Psoas muscle (tissue), 8 donors: ENCODE measurements at regions of chr2 and their contacts with region 1.

Region 1: GRCh38 chr2:98012561-98012991 is 16.8 kb upstream of the TMEM131 start:
- DNase-seq: no peak
- ATAC-seq: no peak
- H3K4me3 ChIP-seq: no peak overlapping the region
- H3K27ac ChIP-seq: peak overlapping the region; percentile 89
- H3K4me1 ChIP-seq: peaks cover 28% of the 10 kb centered on the region
- H3K27me3 ChIP-seq: no peaks in the 10 kb centered on the region
- CTCF ChIP-seq: no peak

Region 2: GRCh38 chr2:96452053-96452452 is 1560.5 kb before region 1 on chr2:
- intact Hi-C with region 1: no loop called
- DNase-seq: no peak
- ATAC-seq: no peak
- H3K4me3 ChIP-seq: no peak overlapping the region
- H3K27ac ChIP-seq: no peak overlapping the region
- H3K4me1 ChIP-seq: no peaks in the 10 kb centered on the region
- H3K27me3 ChIP-seq: no peaks in the 10 kb centered on the region
- CTCF ChIP-seq: no peak

Region 3: DNA sequence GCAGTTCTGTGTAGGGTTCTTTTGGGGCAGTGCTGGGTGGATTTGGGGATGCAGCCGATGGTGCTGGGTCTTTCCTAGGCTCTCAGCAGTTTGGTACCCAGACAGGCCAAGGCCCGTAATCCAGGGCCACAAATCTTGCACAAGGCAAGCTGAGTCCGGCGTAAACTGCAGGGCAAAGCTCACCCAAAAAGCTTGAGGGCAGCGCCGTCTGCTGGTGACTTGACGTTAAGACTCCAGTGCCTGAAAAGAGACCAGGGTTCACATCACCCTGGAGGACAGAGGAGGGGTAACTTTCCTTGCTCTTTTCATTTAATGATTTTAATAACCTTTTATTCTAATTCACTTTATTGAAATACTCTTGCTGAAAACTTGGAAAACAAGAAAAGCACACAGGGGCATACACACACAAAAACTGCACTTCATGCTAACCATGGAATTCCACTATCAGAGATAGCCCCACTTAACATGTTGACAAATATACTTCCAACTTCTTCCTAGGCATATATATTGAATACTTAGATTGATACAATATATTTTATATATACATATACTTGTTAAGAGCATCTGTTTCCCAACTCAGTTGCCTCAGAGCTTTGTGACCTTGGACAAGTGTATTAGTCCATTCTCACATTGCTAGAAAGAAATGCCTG is 372.6 kb after region 1 on chr2:
- intact Hi-C with region 1: loop called in 1 of 2 experiments (anchors 10 kb)
- DNase-seq: peak; percentile 66 to 86
- ATAC-seq: peak; percentile 83 to 98 (median 90)
- H3K4me3 ChIP-seq: no peak overlapping the region
- H3K27ac ChIP-seq: no peak overlapping the region
- H3K4me1 ChIP-seq: no peaks in the 10 kb centered on the region
- H3K27me3 ChIP-seq: peaks cover 0 to 2% (median 0%) of the 10 kb centered on the region in 3 donors
- CTCF ChIP-seq: peak; percentile 90

Region 4: GRCh38 chr2:99489761-99490622 is 1477.4 kb after region 1 on chr2 and contains the start of gene REV1:
- intact Hi-C with region 1: no loop called
- DNase-seq: peak; percentile 94 to 96
- ATAC-seq: peak; percentile 94 to 96 (median 96)
- H3K4me3 ChIP-seq: peak within 1 kb of the TSS; percentile 90
- H3K27ac ChIP-seq: peak within 1 kb of the TSS; percentile 97
- H3K4me1 ChIP-seq: peaks cover 34% of the 10 kb centered on the region
- H3K27me3 ChIP-seq: no peaks in the 10 kb centered on the region
- CTCF ChIP-seq: peak; percentile 64
- total RNA-seq, gene REV1: 19.9 to 26.0 (median 24.7) TPM